PC-9 (cell line): ENCODE measurements at regions of chr10 and their contacts with region 1.

Region 1: DNA sequence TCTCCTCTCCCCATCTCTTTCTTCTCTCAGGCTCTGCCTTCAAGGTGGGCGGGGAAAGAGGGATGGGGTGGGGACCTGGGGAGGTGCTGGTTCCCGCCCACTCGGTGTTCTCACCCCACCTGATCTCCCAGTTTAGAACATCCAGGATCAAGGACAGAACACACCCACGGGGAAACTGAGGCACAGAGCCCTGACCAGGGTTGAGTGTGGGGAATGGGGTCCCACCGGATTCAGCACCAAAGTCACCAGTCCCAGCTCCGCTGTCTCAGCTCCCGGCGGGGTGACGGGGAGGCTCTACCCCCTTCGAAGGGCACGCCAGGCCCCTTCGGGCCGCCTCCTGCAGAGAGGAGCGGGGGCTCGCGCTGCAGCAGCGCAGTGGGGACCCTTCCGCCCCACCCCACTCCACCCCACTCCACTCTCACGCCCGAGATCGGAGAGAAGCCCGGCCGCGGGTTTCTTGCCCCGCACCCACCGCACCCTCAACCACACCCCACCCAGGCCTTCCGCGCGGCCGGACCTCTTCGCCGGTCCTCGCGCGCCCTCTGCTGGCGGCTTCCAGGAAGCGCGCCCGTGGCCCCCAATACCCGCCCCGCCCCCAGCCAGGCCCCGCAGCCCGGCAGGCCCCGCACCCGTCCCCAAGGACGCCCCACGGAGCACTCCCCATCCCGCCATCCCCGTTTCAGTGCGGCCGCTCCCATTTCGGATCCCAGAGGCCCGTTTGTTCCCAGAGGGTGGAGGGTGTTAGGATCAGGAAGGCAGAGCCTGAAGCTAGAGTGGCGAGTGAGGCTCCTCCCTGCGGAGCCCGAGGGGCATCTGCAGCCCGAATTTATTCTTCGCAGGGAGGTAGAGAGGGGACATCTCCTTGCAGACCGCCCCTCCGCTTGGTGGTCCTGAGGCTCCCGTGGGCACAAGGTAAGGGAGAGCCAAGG is 18.0 kb downstream of the POLL start:
- DNase-seq: peak in 1 of 2 experiments; percentile 58
- H3K4me3 ChIP-seq: peak overlapping the region; percentile 68
- H3K27ac ChIP-seq: no peak overlapping the region
- H3K4me1 ChIP-seq: no peaks in the 10 kb centered on the region
- H3K27me3 ChIP-seq: peaks cover 15% of the 10 kb centered on the region
- CTCF ChIP-seq: peak; percentile 78

Region 2: DNA sequence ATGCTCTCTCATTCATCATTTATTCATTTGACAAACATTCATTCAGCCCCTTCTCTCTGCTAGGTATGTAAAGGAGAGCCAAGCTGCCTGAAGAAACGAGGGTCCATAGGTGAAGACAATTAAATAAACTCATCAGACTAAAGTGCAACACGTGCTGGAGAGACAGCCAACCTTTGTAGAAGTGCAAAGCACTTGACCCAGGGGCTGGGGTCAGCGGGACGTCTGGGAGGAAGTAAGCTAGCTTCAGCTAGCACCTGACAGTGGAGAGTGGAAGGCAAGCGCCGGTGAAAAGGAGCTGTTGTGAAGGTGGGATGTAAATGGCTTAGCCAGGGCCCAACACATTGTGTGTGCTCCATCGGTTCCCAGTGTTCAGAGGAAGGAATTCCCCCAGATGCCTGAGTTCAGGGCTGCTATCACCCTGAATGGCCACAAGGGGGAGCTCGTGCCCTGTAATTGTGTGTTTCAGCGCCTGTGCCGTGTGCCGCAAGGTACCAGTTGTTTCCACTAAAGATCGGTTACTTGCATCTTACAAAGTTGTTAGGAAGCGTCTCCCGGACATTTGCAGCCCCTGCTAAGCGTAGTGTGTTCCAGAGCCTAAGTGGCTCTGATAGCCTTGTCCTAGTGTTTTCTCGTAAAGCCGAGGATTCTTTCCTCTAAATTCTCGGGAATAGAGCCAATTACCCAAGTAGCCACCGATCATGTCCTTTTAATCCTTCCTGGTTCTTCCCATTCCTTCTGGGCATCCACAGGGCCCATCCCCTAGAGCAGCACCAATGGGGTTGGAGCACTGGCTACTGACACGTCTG is 408.4 kb before region 1 on chr10:
- CTCF ChIA-PET with region 1: interaction called, 3 read pairs
- POLR2A ChIA-PET with region 1: no interaction called
- intact Hi-C with region 1: loop called (anchors 2 kb)
- DNase-seq: peak; percentile 44 to 48
- H3K4me3 ChIP-seq: no peak overlapping the region
- H3K27ac ChIP-seq: no peak overlapping the region
- H3K4me1 ChIP-seq: no peaks in the 10 kb centered on the region
- H3K27me3 ChIP-seq: peaks cover 27% of the 10 kb centered on the region
- CTCF ChIP-seq: peak; percentile 88

Region 3: DNA sequence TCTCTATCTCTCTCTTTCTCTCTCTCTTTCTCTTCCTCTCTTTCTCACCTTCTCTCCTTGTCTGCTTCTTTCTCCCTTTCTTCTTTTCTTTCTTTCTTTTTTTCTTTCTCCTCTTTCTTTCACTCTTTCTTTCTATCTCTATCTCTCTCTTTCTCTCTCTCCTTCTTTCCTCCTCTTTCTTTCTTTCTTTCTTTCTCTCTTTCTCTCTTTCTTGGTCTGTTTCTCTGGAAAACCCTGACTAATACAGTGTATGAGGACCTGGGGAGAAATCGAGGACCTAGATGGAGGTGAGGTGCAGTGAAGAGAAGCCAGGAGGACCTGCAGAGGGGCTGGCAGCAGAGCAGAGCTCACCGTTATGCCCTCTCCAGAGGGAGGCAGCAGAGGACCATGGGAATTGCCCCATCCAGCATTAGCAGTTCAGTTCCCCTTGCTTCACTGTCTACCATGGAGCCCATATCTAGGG is 268.8 kb before region 1 on chr10:
- CTCF ChIA-PET with region 1: no interaction called
- POLR2A ChIA-PET with region 1: no interaction called
- intact Hi-C with region 1: loop called (anchors 5 kb)
- DNase-seq: peak in 1 of 2 experiments; percentile 46
- H3K4me3 ChIP-seq: no peak overlapping the region
- H3K27ac ChIP-seq: no peak overlapping the region
- H3K4me1 ChIP-seq: no peaks in the 10 kb centered on the region
- H3K27me3 ChIP-seq: peaks cover 7% of the 10 kb centered on the region; the same call in 1 of the 2 replicates
- CTCF ChIP-seq: peak; percentile 58

Region 4: GRCh38 chr10:101353692-101354327 is 216.3 kb before region 1 on chr10 and contains the start of gene BTRC:
- CTCF ChIA-PET with region 1: no interaction called
- POLR2A ChIA-PET with region 1: no interaction called
- intact Hi-C with region 1: no loop called
- DNase-seq: peak; percentile 92 to 94
- H3K4me3 ChIP-seq: peak within 1 kb of the TSS; percentile 86
- H3K27ac ChIP-seq: peak within 1 kb of the TSS; percentile 39
- H3K4me1 ChIP-seq: peaks cover 11% of the 10 kb centered on the region; the same call in 1 of the 2 replicates
- H3K27me3 ChIP-seq: no peaks in the 10 kb centered on the region
- CTCF ChIP-seq: no peak
- total RNA-seq, gene BTRC: 14.1 and 15.6 TPM in 2 replicates

Region 5: GRCh38 chr10:101467286-101467770 is 102.8 kb before region 1 on chr10:
- CTCF ChIA-PET with region 1: interaction called, 10 read pairs
- POLR2A ChIA-PET with region 1: no interaction called
- intact Hi-C with region 1: no loop called
- DNase-seq: peak; percentile 4 to 79
- H3K4me3 ChIP-seq: no peak overlapping the region
- H3K27ac ChIP-seq: no peak overlapping the region
- H3K4me1 ChIP-seq: no peaks in the 10 kb centered on the region
- H3K27me3 ChIP-seq: no peaks in the 10 kb centered on the region
- CTCF ChIP-seq: peak; percentile 72

Region 6: GRCh38 chr10:101587725-101588653 is 17.9 kb after region 1 on chr10 and contains the starts of genes DPCD and POLL:
- CTCF ChIA-PET with region 1: interaction called, 16 read pairs
- POLR2A ChIA-PET with region 1: no interaction called
- intact Hi-C with region 1: no loop called
- DNase-seq: peak; percentile 79 to 83
- H3K4me3 ChIP-seq: peak within 1 kb of the TSS; percentile 97
- H3K27ac ChIP-seq: no peak within 1 kb of the TSS
- H3K4me1 ChIP-seq: peaks cover 12% of the 10 kb centered on the region; the same call in 1 of the 2 replicates
- H3K27me3 ChIP-seq: no peaks in the 10 kb centered on the region
- CTCF ChIP-seq: no peak
- total RNA-seq, gene DPCD: 20.3 and 21.5 TPM in 2 replicates
- total RNA-seq, gene POLL: 30.3 and 31.5 TPM in 2 replicates